K562 (cell line): ENCODE measurements at regions of chr18 and their contacts with region 1.

Region 1: DNA sequence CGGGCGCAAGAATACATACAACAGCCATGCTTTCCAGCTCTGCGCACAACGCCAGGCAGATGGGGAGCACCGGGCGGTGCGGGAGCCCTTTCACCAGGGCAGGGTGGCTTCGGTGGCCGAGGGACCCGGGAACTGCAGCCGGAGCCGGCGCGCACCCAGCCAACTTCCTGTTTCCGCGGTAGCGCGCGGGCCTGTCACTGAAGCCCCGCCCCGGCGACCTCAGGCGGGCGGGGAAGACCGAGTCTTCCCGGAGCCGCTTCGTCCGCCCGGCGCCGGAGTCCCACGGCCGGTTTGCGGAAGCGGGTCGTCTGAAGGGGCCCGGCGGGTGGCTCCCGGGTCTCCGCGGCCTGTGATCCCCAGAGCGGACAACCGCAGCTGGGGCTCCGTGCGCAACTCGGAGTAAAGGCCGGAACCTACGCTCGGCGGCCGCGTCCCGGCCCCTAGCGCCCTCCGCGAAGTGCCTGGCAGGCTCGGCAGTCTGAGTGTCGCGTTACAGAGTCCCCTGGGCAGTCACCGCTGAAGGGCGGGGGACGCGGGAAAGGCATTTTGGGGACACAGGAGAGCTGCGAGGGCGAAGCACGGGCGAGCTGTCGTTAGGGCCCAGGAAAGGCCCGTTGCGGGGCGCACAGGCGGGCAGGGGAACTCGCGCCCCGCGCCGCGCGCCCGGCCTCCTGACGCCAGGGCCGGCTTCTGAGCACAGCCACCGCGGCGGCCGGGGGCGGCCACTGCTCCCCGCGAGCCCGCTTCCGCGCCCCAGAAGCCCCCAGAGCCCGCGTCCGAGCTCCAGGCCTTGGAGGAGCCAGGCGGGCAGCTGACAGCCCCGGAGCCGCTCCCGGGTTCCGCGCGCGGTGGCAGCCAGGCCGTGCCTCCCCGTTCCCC is at the start of gene MPPE1:
- DNase-seq: peak; percentile 87 to 93 (median 89)
- ATAC-seq: peak; percentile 97
- H3K4me3 ChIP-seq: peak within 1 kb of the TSS; percentile 72
- H3K27ac ChIP-seq: peak within 1 kb of the TSS; percentile 90
- H3K4me1 ChIP-seq: peaks cover 2 to 16% of the 10 kb centered on the region in 2 experiments; a peak in 4 of 5 replicates
- H3K27me3 ChIP-seq: no peaks in the 10 kb centered on the region
- CTCF ChIP-seq: no peak
- EP300 ChIP-seq: no peak
- POLR2A ChIP-seq: peak; percentile 93
- RAD21 ChIP-seq: no peak
- polyA plus RNA-seq, gene MPPE1: 13.3 to 13.4 TPM

Region 2: GRCh38 chr18:12155996-12156395 is 247.6 kb after region 1 on chr18:
- CTCF ChIA-PET with region 1: no interaction called
- POLR2A ChIA-PET with region 1: no interaction called
- in situ Hi-C with region 1: no loop called
- intact Hi-C with region 1: no loop called
- DNase-seq: no peak
- ATAC-seq: no peak
- H3K4me3 ChIP-seq: no peak overlapping the region
- H3K27ac ChIP-seq: no peak overlapping the region
- H3K4me1 ChIP-seq: no peaks in the 10 kb centered on the region
- H3K27me3 ChIP-seq: 0 out of 5 replicates have a peak, but pooled peaks cover 0 to 4% of the 10 kb centered on the region in 2 experiments
- CTCF ChIP-seq: no peak
- EP300 ChIP-seq: no peak
- POLR2A ChIP-seq: no peak
- RAD21 ChIP-seq: no peak

Region 3: DNA sequence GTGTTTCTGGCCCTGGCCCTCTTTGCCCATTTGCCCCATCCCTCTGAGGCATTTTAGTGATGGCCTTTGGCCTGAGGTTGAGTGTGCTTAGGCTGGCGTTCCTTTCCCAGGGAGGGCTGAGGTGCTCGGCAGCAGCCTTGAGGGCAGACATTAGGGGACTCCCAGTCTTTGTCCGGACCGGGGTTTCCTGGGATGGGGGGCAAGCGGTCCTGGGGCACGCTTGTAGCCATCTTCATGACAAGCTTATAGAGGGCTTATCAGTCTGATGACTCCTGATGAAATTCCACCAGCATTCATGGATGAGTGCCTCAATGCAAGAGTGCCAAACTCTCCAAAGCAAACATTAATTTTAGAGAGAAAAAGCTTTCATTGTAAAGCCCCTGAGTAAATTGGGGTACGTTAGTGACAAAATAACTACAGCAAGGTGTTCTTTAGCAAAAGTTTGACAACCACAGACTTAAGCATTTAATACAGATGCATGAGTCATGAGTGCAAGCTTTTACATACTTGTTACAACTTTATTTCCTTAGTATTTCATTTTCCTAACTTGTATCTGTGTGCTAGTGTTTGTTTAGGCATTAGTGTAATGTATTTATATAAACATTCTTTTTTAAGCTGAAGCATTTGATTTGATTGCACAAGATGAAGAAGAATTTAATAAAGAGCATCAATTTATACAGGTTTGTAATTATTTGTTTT is 1128.3 kb after region 1 on chr18:
- CTCF ChIA-PET with region 1: no interaction called
- POLR2A ChIA-PET with region 1: no interaction called
- in situ Hi-C with region 1: loop called (anchors 10 kb)
- intact Hi-C with region 1: no loop called
- DNase-seq: no peak
- ATAC-seq: no peak
- H3K4me3 ChIP-seq: no peak overlapping the region
- H3K27ac ChIP-seq: no peak overlapping the region
- H3K4me1 ChIP-seq: peaks cover 0 to 3% of the 10 kb centered on the region in 2 experiments; a peak in 1 of 5 replicates
- H3K27me3 ChIP-seq: no peaks in the 10 kb centered on the region
- CTCF ChIP-seq: no peak
- EP300 ChIP-seq: no peak
- POLR2A ChIP-seq: no peak
- RAD21 ChIP-seq: no peak